WTC11 (cell line): ENCODE measurements at regions of chr2 and their contacts with region 1.

Region 1: DNA sequence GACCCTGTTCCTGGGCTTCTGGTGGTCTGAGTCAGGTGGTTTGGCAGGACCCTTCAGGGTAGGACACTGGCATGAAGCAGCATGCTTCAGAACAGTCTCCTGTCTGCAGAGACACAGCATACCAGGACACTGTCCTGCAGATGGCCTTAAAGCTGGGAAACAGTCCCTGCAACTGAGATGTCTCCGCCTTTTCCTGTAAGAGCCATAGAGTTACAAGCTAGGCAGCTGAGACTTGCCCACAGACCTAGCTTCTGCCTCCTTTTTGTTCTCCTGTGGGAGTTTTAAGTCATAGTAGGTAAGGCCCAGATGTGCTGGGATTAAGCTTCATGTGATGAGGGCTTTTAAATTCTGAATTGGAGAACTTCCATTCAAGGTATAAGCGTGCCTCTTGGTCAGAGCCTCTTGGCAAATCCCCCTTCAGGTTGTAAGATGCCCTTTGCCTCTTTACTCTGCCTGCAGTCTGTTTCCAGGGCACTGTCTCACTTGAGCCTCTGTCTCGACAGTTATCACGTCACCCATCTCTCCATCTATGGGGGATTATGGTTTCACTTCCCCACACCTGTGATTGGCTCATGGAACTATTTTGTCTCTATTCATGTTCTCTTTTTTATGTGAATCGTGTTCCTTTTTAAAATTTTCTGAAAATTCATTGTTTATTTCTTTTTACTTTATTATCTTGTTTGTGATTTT is 51.8 kb downstream of the COA5 start:
- DNase-seq: no peak
- ATAC-seq: no peak
- H3K4me3 Mint-ChIP-seq: no peak overlapping the region
- H3K27ac Mint-ChIP-seq: no peak overlapping the region
- H3K4me1 Mint-ChIP-seq: no peaks in the 10 kb centered on the region
- H3K27me3 Mint-ChIP-seq: no peaks in the 10 kb centered on the region
- CTCF ChIP-seq: no peak

Region 2: DNA sequence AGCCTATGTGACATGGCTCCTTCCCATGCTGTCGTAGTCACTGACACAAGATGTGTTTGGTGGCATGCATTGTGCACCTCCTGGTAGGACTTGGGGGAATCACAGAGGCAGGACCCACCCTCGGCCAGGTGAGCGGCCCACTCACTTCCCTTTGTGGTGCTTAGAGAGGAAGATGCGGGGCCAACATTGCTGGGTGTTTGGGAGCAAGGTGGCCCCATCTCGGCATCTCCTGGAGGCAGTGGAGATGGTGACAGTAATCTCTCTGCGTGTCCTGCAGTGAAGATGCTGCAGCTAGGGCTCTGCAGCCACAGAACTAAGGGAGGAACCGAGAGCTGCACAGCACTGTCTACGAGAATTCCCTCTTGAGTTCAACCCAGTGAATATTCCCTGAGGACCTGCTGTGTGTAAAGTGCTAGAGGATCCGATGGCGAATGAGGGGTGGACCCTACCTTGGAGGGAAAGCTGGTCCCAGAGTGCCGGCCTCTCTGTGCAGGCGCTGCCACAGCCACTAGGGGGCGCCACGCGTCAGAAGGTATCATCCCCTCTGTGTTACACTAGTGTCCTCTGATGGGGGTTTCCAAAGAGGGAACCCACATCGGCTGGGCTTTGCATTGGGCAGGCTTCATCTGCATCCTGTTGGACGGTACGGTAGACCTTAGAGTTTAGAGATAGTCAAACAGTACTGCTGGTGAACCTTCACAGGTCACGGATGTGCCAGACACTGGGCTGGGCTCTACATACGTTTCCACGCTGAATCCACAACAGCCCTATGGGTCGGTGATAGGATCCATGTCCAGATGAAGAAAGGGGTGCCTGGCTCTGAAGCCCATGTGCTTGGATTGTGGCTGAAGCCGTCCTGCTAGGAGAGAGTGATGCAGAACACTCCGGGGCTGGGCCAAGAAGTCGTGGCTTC is 12.6 kb after region 1 on chr2:
- CTCF ChIA-PET with region 1: interaction called, 12 read pairs
- POLR2A ChIA-PET with region 1: interaction called, 3 read pairs
- DNase-seq: peak; percentile 88
- ATAC-seq: peak; percentile 97
- H3K4me3 Mint-ChIP-seq: no peak overlapping the region
- H3K27ac Mint-ChIP-seq: no peak overlapping the region
- H3K4me1 Mint-ChIP-seq: no peaks in the 10 kb centered on the region
- H3K27me3 Mint-ChIP-seq: no peaks in the 10 kb centered on the region
- CTCF ChIP-seq: peak; percentile 99